Vagina (tissue), 2 donors: ENCODE measurements at regions of chr12 and their contacts with region 1.

Region 1: GRCh38 chr12:12081836-12082497 is 11.2 kb downstream of the BCL2L14 start:
- DNase-seq: peak in 1 of 2 donors; percentile 87
- H3K4me3 ChIP-seq: no peak overlapping the region
- H3K27ac ChIP-seq: peak overlapping the region; percentile 42
- H3K4me1 ChIP-seq: no peaks in the 10 kb centered on the region
- H3K27me3 ChIP-seq: no peaks in the 10 kb centered on the region
- CTCF ChIP-seq: peak; percentile 8 to 38 (median 9)
- POLR2A ChIP-seq: no peak

Region 2: DNA sequence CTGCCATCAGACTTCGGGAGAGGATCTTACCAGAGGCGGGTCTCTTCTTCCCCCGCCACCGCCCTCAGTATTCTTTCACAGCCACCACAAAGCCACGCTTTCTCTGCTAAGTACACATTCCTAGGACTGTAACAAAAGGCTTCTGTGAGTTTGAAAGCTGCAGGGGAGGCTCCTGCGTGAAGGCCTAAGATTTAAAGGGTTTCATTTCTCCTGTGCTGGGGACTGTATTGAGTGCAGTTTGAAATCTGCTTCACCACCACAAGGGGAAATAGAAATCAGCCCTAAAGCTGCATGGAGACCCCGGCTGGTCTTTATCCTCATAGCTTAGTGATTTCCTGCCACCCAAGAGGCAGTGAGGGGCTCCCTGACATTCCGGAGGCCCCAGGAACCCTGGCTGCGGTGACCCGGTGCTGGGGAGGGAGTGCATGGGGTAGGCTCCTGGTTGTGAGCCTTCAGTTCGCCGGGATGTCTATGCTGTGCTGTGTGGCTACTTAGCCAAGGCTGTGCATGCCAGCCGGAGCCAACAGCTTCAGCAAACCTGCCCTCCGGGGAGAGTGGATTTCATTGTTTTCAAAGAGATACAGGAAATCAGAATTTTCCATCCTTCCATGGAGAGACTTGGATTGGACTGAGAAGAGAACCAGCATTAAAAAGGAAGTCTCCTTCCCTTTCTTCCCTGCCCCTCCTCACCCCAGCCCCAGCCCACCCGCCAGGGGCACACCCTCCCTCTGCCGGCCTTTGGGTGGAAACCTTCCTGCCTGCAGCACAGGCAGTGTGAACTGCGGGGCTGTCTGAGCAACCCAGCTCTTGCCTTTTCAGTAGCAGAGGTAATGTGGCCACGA is 269.2 kb before region 1 on chr12:
- intact Hi-C with region 1: no loop called
- DNase-seq: no peak
- H3K4me3 ChIP-seq: peak overlapping the region; percentile 20 to 39
- H3K27ac ChIP-seq: peak overlapping the region; percentile 61
- H3K4me1 ChIP-seq: peaks cover 43% of the 10 kb centered on the region
- H3K27me3 ChIP-seq: no peaks in the 10 kb centered on the region
- CTCF ChIP-seq: peak in 1 of 3 experiments; percentile 2
- POLR2A ChIP-seq: no peak

Region 3: GRCh38 chr12:11862798-11863197 is 219.2 kb before region 1 on chr12:
- intact Hi-C with region 1: no loop called
- DNase-seq: no peak
- H3K4me3 ChIP-seq: no peak overlapping the region
- H3K27ac ChIP-seq: peak overlapping the region; percentile 64
- H3K4me1 ChIP-seq: peaks cover 42% of the 10 kb centered on the region
- H3K27me3 ChIP-seq: no peaks in the 10 kb centered on the region
- CTCF ChIP-seq: no peak
- POLR2A ChIP-seq: no peak

Region 4: GRCh38 chr12:12153596-12153995 is 71.6 kb after region 1 on chr12:
- intact Hi-C with region 1: no loop called
- DNase-seq: no peak
- H3K4me3 ChIP-seq: no peak overlapping the region
- H3K27ac ChIP-seq: no peak overlapping the region
- H3K4me1 ChIP-seq: no peaks in the 10 kb centered on the region
- H3K27me3 ChIP-seq: no peaks in the 10 kb centered on the region
- CTCF ChIP-seq: no peak
- POLR2A ChIP-seq: no peak

Region 5: DNA sequence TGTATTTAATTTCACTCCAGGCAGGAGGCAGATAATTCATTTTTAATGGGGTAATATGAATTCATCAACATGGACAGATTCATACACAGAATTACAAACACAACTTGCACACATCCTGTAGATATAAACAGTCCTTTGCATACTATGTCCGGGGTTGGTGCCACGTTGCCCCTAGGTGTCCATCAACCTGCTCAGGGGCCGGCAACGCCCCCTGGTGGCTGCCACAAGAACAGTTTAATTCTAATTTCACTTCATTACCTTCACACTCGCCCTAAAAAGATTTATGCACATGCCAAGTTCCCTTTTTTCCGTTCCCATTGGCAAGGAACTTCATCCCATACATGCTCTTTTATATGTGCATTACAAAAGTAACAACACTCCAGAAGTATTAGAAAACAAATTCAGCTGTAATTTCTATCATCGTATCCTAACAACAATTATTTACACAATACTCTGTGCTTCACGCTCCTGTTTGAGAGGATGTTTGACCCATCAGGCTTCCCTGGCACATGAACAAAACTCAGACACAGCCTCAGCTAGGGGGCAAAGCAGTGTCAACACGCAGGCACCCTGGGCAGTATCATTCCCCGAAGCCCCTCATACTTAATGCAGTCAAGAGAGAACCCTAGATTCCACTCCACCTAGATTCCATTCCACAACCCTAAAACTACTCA is 252.5 kb after region 1 on chr12:
- intact Hi-C with region 1: loop called (anchors 2 kb)
- DNase-seq: no peak
- H3K4me3 ChIP-seq: no peak overlapping the region
- H3K27ac ChIP-seq: no peak overlapping the region
- H3K4me1 ChIP-seq: peaks cover 32% of the 10 kb centered on the region
- H3K27me3 ChIP-seq: no peaks in the 10 kb centered on the region
- CTCF ChIP-seq: peak; percentile 46 to 63 (median 57)
- POLR2A ChIP-seq: no peak